ENCODE measurements at regions of chr11 and their contacts with region 1.

Region 1: GRCh38 chr11:14320020-14320419 is 39.0 kb downstream of the RRAS2 start:
- DNase-seq: no peak
- H3K4me3 ChIP-seq: no peak overlapping the region
- H3K27ac ChIP-seq: no peak overlapping the region
- H3K4me1 ChIP-seq: peaks cover 69% of the 10 kb centered on the region
- H3K27me3 ChIP-seq: no peaks in the 10 kb centered on the region
- CTCF ChIP-seq: no peak
- POLR2A ChIP-seq: no peak

Region 2: GRCh38 chr11:14331476-14332136 is 11.6 kb after region 1 on chr11:
- CTCF ChIA-PET with region 1: interaction called, 7 read pairs
- POLR2A ChIA-PET with region 1: interaction called, 10 read pairs
- dilution Hi-C with region 1: no loop called
- intact Hi-C with region 1: no loop called
- DNase-seq: peak; percentile 64
- H3K4me3 ChIP-seq: no peak overlapping the region
- H3K27ac ChIP-seq: no peak overlapping the region
- H3K4me1 ChIP-seq: peaks cover 15% of the 10 kb centered on the region
- H3K27me3 ChIP-seq: no peaks in the 10 kb centered on the region
- CTCF ChIP-seq: no peak
- POLR2A ChIP-seq: no peak

Measured in endothelial cell of umbilical vein (primary cell).